ENCODE measurements at regions of chr12 and their contacts with region 1.

Region 1: DNA sequence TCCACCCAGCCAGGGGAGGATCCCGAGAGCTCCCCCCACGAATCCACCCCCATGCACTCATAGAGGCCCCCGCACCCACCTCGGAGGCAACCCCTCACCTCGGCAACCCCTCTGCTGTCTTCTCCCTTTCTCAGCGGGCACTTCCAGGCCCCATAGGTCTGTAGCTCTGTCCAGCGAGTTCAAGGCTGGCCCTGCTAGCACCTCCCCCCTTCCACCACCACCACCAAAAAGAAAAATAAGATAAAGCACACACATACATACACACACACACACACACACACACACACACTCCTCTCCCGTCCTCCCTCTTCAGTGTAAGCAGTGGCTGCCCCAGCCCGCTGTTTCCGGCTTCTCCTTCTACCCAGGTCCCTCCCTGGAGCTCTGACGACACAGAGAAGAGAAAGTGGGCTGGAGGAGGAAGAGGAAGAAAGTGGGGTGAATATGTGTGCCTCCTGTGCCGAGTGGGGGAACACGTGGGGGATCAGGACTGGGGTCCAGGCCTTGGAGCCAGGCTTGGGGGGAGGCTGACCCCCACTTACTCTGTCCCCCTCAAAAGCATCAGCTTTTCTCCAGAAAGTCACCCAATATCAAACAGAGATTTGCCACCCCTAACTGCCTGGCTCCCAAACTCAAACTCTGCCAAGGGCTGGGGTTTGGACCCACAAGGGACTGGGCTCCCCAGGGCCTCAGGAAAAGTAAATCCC is at the start of gene STAT6:
- DNase-seq: no peak
- ATAC-seq: peak; percentile 81
- H3K4me3 ChIP-seq: peak within 1 kb of the TSS; percentile 95
- H3K27ac ChIP-seq: peak within 1 kb of the TSS; percentile 97
- H3K4me1 ChIP-seq: peaks cover 8% of the 10 kb centered on the region
- H3K27me3 ChIP-seq: no peaks in the 10 kb centered on the region
- CTCF ChIP-seq: no peak
- EP300 ChIP-seq: no peak
- POLR2A ChIP-seq: peak; percentile 74
- RAD21 ChIP-seq: no peak
- polyA plus RNA-seq, gene STAT6: 14.2 to 17.3 TPM

Region 2: GRCh38 chr12:56759263-56759908 is 351.8 kb before region 1 on chr12:
- CTCF ChIA-PET with region 1: interaction called, 32 read pairs
- POLR2A ChIA-PET with region 1: no interaction called
- RAD21 ChIA-PET with region 1: interaction called, 22 read pairs
- SMC1A ChIA-PET with region 1: interaction called, 11 read pairs
- in situ Hi-C with region 1: loop called (anchors 5 kb)
- intact Hi-C with region 1: loop called (anchors 5 kb)
- DNase-seq: no peak
- ATAC-seq: no peak
- H3K4me3 ChIP-seq: no peak overlapping the region
- H3K27ac ChIP-seq: no peak overlapping the region
- H3K4me1 ChIP-seq: no peaks in the 10 kb centered on the region
- H3K27me3 ChIP-seq: no peaks in the 10 kb centered on the region
- CTCF ChIP-seq: no peak
- EP300 ChIP-seq: no peak
- POLR2A ChIP-seq: no peak
- RAD21 ChIP-seq: no peak

Region 3: GRCh38 chr12:56998981-56999380 is 112.2 kb before region 1 on chr12:
- CTCF ChIA-PET with region 1: interaction called, 117 read pairs
- POLR2A ChIA-PET with region 1: interaction called, 8 read pairs
- RAD21 ChIA-PET with region 1: interaction called, 44 read pairs
- SMC1A ChIA-PET with region 1: interaction called, 54 read pairs
- in situ Hi-C with region 1: loop called (anchors 5 kb)
- intact Hi-C with region 1: no loop called
- DNase-seq: peak; percentile 69
- ATAC-seq: peak; percentile 89
- H3K4me3 ChIP-seq: no peak overlapping the region
- H3K27ac ChIP-seq: peak overlapping the region; percentile 56
- H3K4me1 ChIP-seq: peaks cover 34% of the 10 kb centered on the region
- H3K27me3 ChIP-seq: no peaks in the 10 kb centered on the region
- CTCF ChIP-seq: no peak
- EP300 ChIP-seq: peak in 1 of 2 experiments; percentile 59; a peak in 2 of 4 replicates
- POLR2A ChIP-seq: no peak
- RAD21 ChIP-seq: no peak

Region 4: DNA sequence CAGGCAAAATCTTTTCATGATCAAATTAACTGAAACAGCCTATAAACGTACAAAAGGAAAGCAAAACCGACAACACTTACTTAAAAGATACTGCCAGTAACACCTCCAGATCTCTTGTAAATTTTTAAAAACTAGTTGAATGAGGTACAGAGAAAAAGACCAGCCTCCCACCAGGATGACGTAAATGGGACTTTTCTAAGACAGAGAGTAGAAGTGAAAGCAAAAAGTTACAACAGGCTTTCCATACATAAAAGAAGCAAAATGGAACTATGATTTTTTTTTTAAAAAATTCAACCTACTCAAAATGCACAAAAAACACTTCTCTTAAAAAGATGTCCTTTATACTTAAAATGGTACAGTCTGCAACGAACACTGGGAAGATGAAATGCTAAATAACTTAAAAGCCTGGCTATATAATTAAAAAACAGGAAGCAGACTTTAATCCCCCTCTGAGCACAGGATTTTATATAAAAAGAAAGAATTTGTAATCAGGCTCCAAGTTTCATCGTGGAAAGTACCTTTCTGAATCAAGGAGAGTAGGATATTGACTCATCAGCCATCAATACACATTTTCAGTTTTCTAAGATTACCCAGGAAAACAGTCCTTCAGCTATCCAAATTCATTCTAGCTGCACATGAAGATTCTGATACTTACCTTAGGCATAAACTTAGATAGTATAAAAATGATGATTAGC is 47.0 kb before region 1 on chr12:
- CTCF ChIA-PET with region 1: interaction called, 458 read pairs
- POLR2A ChIA-PET with region 1: interaction called, 94 read pairs
- RAD21 ChIA-PET with region 1: interaction called, 285 read pairs
- SMC1A ChIA-PET with region 1: interaction called, 246 read pairs
- in situ Hi-C with region 1: loop called (anchors 5 kb)
- intact Hi-C with region 1: loop called (anchors 1 kb)
- DNase-seq: peak; percentile 69
- ATAC-seq: peak; percentile 96
- H3K4me3 ChIP-seq: peak overlapping the region; percentile 48; the same call in 1 of the 2 replicates
- H3K27ac ChIP-seq: peak overlapping the region; percentile 59
- H3K4me1 ChIP-seq: peaks cover 10% of the 10 kb centered on the region
- H3K27me3 ChIP-seq: no peaks in the 10 kb centered on the region
- CTCF ChIP-seq: no peak
- EP300 ChIP-seq: no peak
- POLR2A ChIP-seq: no peak
- RAD21 ChIP-seq: no peak

Region 5: GRCh38 chr12:57096099-57096572 is 15.0 kb before region 1 on chr12:
- CTCF ChIA-PET with region 1: interaction called, 144 read pairs
- POLR2A ChIA-PET with region 1: interaction called, 41 read pairs
- RAD21 ChIA-PET with region 1: interaction called, 125 read pairs
- SMC1A ChIA-PET with region 1: interaction called, 120 read pairs
- in situ Hi-C with region 1: no loop called
- intact Hi-C with region 1: loop called (anchors 1 kb)
- DNase-seq: no peak
- ATAC-seq: no peak
- H3K4me3 ChIP-seq: no peak overlapping the region
- H3K27ac ChIP-seq: peak overlapping the region; percentile 38; the same call in 1 of the 2 replicates
- H3K4me1 ChIP-seq: peaks cover 28% of the 10 kb centered on the region
- H3K27me3 ChIP-seq: no peaks in the 10 kb centered on the region
- CTCF ChIP-seq: no peak
- EP300 ChIP-seq: no peak
- POLR2A ChIP-seq: peak; percentile 56
- RAD21 ChIP-seq: no peak

Region 6: GRCh38 chr12:57229634-57230380 is 118.6 kb after region 1 on chr12 and contains the start of gene SHMT2:
- CTCF ChIA-PET with region 1: interaction called, 5 read pairs
- POLR2A ChIA-PET with region 1: interaction called, 15 read pairs
- RAD21 ChIA-PET with region 1: interaction called, 7 read pairs
- SMC1A ChIA-PET with region 1: interaction called, 11 read pairs
- in situ Hi-C with region 1: no loop called
- intact Hi-C with region 1: no loop called
- DNase-seq: peak; percentile 93
- ATAC-seq: peak; percentile 79
- H3K4me3 ChIP-seq: peak within 1 kb of the TSS; percentile 79
- H3K27ac ChIP-seq: peak within 1 kb of the TSS; percentile 93
- H3K4me1 ChIP-seq: peaks cover 31% of the 10 kb centered on the region
- H3K27me3 ChIP-seq: peaks cover 2 to 4% of the 10 kb centered on the region in 2 experiments; a peak in 3 of 4 replicates
- CTCF ChIP-seq: no peak
- EP300 ChIP-seq: no peak
- POLR2A ChIP-seq: peak; percentile 82
- RAD21 ChIP-seq: no peak
- polyA plus RNA-seq, gene SHMT2: 57.0 to 65.6 TPM

Measured in GM12878 (cell line).